ENCODE measurements at regions of chr3 and their contacts with region 1.

Region 1: GRCh38 chr3:109863701-109864100 is 526.4 kb upstream of the DPPA4 start:
- DNase-seq: no peak
- ATAC-seq: no peak
- H3K4me3 ChIP-seq: no peak overlapping the region
- H3K4me3 Mint-ChIP-seq: no peak overlapping the region
- H3K27ac ChIP-seq: no peak overlapping the region
- H3K27ac Mint-ChIP-seq: no peak overlapping the region
- H3K4me1 ChIP-seq: no peaks in the 10 kb centered on the region
- H3K4me1 Mint-ChIP-seq: peaks cover 0 to 9% (median 0%) of the 10 kb centered on the region in 7 donors
- H3K27me3 ChIP-seq: no peaks in the 10 kb centered on the region
- H3K27me3 Mint-ChIP-seq: no peaks in the 10 kb centered on the region

Region 2: DNA sequence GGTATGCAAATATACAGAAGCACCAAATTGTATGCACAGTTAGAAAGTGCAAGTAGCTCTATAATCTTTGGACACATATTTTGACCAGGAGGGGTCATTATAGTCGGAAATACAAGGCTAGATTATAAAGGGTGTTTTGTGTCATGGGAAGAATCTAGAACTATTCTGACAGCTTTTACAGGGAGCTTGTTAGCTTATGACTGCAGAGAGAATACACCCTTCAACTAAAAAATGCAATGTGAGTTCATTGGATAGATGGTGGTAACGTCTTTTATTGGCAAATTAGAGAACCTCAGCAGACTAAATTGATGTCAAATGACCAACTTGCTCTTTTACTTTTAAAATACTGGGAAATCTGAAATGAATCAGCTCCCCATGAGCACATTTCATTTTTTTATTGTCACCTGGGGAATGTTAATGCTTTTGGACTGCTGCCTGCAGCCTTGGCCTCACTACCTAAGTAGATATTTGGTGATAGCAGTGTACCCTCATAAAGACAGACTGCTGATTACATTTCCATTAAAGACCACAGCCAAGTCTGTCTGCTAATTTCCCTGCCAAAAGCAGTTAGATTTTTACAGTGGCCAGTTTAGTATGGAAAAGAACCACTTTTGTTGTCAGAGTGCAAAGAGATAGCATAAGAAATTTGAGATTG is 10.5 kb before region 1 on chr3:
- CTCF ChIA-PET with region 1: no interaction called
- POLR2A ChIA-PET with region 1: no interaction called
- intact Hi-C with region 1: loop called in 1 of 2 experiments (anchors 2 kb)
- DNase-seq: no peak
- ATAC-seq: no peak
- H3K4me3 ChIP-seq: no peak overlapping the region
- H3K4me3 Mint-ChIP-seq: no peak overlapping the region
- H3K27ac ChIP-seq: no peak overlapping the region
- H3K27ac Mint-ChIP-seq: no peak overlapping the region
- H3K4me1 ChIP-seq: no peaks in the 10 kb centered on the region
- H3K4me1 Mint-ChIP-seq: peaks cover 0 to 6% (median 0%) of the 10 kb centered on the region in 7 donors
- H3K27me3 ChIP-seq: no peaks in the 10 kb centered on the region
- H3K27me3 Mint-ChIP-seq: no peaks in the 10 kb centered on the region

Region 3: DNA sequence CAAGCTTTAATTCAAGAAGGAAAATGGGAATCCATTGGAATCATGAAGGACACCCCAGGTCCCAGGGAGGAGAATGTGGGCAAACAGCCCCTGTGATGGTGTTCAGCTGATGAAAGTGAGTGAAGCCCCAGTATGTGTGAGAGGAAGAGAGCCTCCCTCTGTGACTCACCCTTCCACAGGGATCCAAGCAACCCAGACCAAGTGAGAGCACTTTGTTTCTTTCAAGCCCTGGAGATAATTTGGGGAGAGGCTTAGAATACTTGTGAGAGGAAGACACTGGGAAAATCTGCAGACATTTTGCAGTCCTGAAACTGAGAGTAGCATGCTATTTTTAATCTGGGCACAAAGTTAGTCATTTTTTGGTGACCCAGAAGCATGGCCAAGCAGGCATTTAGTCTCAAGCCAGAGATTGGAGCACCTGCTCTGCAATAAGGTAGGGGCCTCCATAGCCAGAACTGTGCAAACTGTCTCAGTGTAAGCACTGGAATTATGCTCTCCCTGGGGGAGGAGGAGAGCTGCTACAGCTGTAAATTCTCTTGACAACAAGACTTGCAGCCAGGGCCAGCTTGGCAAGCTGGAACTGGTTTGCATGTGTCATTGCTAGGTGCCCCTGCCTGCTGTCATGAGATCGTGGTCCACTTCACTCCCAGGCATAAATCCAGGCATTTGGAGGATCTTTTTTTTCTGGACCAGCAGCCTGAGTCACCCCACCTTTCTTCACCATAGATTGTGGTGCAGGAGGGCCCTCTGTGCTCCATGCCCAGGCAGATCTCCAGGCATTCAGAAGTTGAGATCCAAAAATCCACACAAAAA is 11.4 kb after region 1 on chr3:
- CTCF ChIA-PET with region 1: no interaction called
- POLR2A ChIA-PET with region 1: interaction called, 3 read pairs
- intact Hi-C with region 1: loop called in 1 of 2 experiments (anchors 1 kb)
- DNase-seq: no peak
- ATAC-seq: no peak
- H3K4me3 ChIP-seq: no peak overlapping the region
- H3K4me3 Mint-ChIP-seq: no peak overlapping the region
- H3K27ac ChIP-seq: no peak overlapping the region
- H3K27ac Mint-ChIP-seq: no peak overlapping the region
- H3K4me1 ChIP-seq: no peaks in the 10 kb centered on the region
- H3K4me1 Mint-ChIP-seq: no peaks in the 10 kb centered on the region
- H3K27me3 ChIP-seq: no peaks in the 10 kb centered on the region
- H3K27me3 Mint-ChIP-seq: no peaks in the 10 kb centered on the region

Measured in naive thymus-derived CD4-positive, alpha-beta T cell (primary cell).